ENCODE measurements at regions of chr17 and their contacts with region 1.

Region 1: DNA sequence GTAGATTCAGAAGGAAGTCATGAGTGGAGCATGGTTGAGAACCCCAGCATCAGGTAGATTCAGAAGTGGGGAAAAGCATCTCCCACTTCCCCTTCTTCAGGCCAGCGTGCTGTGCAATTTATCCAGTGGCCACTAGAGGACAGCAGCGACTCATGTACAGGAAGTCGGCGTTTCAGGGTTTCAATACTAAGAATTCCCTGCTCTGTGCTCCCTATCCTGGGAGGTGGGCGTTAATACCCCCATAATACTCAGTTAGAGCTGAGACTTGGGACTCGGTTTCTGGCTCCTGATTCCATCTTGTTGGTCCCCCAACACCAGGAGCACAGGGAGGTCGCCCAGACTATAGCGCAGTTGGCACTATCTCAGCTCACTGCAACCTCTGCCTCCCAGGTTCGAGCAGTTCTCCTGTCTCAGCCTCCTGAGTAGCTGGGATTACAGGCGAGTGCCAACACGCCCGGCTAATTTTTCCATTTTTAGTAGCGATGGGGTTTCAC is 75.3 kb upstream of the AMZ2 start:
- DNase-seq: peak; percentile 86
- H3K4me3 Mint-ChIP-seq: no peak overlapping the region
- H3K27ac Mint-ChIP-seq: no peak overlapping the region
- H3K4me1 Mint-ChIP-seq: peaks cover 15% of the 10 kb centered on the region
- H3K27me3 Mint-ChIP-seq: no peaks in the 10 kb centered on the region

Region 2: GRCh38 chr17:68048996-68049395 is 123.5 kb before region 1 on chr17:
- CTCF ChIA-PET with region 1: no interaction called
- intact Hi-C with region 1: no loop called
- DNase-seq: no peak
- H3K4me3 Mint-ChIP-seq: no peak overlapping the region
- H3K27ac Mint-ChIP-seq: no peak overlapping the region
- H3K4me1 Mint-ChIP-seq: no peaks in the 10 kb centered on the region
- H3K27me3 Mint-ChIP-seq: no peaks in the 10 kb centered on the region

Region 3: DNA sequence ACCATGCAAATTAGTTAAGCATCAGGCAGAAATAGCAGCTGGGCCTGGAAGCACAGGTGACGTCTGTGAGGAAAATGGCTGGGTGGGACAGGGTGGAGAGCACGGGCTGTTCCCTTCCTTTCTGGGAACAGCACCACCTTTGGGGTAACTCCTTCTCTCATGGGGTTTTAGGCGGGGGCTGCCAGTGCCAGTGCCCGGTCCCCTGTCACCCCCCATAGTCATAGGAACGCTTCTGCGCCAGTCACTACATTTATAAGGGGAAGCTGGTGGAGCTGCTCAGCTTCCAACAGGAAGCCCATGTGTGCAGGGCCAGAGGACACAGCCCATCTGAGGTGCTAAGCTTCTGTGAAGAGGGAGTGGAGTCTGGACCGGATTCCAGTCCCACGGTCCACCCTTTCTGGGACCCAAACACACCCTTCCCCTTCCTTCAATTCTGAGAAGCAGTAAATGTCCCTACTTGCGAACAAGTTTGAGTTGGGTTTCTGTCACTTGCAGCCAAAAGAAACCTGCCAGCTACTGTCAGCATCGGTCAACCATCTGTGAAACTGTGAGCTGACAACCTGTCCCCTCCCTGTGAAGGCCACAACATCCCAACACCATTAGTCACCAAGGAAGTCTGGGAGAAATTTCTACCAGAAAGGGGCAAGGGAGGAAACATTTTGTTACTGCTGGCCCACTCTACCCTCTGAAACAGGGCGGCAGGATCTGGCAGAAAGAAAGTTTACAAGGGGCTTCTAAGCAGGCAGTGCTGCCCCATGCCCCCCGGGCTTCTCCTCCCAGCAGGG is 10.7 kb before region 1 on chr17:
- CTCF ChIA-PET with region 1: interaction called, 17 read pairs
- intact Hi-C with region 1: no loop called
- DNase-seq: no peak
- H3K4me3 Mint-ChIP-seq: no peak overlapping the region
- H3K27ac Mint-ChIP-seq: no peak overlapping the region
- H3K4me1 Mint-ChIP-seq: peaks cover 6% of the 10 kb centered on the region
- H3K27me3 Mint-ChIP-seq: no peaks in the 10 kb centered on the region

Region 4: GRCh38 chr17:68468334-68468733 is 295.8 kb after region 1 on chr17:
- CTCF ChIA-PET with region 1: interaction called, 21 read pairs
- intact Hi-C with region 1: loop called (anchors 1 kb)
- DNase-seq: no peak
- H3K4me3 Mint-ChIP-seq: no peak overlapping the region
- H3K27ac Mint-ChIP-seq: no peak overlapping the region
- H3K4me1 Mint-ChIP-seq: peaks cover 3% of the 10 kb centered on the region
- H3K27me3 Mint-ChIP-seq: peaks cover 8% of the 10 kb centered on the region

Region 5: DNA sequence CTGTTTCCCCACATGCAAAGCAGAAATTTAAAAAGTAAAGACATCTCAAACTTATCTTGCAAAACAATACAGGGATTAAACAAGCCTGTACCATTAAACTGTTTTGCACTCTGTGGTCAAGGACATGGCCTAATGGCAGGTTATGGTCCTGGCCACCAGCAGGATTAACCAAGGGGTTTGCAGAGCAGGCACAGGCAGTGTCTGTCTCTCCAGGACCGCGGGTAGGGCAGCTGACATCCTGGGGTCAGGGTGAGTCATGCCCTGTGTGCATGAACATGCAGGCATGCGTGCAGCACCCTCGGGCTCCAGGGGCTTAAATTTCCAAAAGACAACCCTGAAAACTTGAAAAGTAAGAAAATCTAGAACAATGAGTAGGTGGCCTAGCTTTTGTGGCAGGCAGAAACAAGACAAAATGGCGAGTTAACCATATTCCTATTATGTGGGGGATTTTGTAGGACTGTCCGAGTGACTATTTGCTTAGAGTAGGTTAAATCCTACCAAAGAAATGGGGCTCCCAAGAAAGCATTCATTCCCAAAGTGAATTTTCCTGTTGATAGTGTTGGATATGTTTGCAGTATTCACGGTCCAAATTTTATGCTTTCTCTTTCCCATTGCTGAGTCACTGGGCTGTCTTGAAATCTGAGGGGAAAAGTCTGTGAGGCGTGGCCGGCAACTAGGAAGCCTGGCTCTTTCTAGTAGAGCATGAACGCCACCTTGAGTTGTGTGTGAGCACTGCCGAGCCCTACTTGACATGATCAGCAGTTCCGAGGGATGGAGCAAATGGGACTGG is 587.0 kb after region 1 on chr17:
- CTCF ChIA-PET with region 1: no interaction called
- intact Hi-C with region 1: loop called (anchors 10 kb)
- DNase-seq: peak; percentile 85
- H3K4me3 Mint-ChIP-seq: peak overlapping the region; percentile 47
- H3K27ac Mint-ChIP-seq: no peak overlapping the region
- H3K4me1 Mint-ChIP-seq: peaks cover 11% of the 10 kb centered on the region
- H3K27me3 Mint-ChIP-seq: peaks cover 2% of the 10 kb centered on the region

Measured in activated naive CD4-positive, alpha-beta T cell treated with anti-CD3 and anti-CD28 coated beads for 36 hours (primary cell).